ENCODE measurements at regions of chr10 and their contacts with region 1.

Region 1: GRCh38 chr10:43689955-43690771 is 41.5 kb upstream of the ZNF32 start:
- DNase-seq: peak; percentile 93

Region 2: DNA sequence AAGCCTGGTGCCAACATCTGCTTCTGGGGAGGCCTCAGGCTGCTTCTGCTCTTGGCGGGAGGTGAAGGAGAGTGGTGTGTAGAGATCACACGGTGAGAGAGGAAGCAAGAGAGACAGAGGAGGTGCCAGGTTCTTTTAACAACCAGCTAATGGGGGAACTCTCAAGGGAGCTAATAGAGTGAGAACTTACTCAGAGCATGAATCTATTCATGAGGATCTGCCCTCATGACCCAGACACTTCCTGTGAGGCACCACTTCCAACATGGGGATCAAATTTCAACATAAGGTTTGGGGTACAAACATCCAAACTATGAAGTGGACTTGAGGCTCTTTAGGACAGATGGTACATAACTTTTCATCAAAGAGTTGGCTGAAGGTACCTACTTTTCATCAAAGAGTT is 36.4 kb before region 1 on chr10:
- intact Hi-C with region 1: no loop called
- DNase-seq: no peak

Region 3: DNA sequence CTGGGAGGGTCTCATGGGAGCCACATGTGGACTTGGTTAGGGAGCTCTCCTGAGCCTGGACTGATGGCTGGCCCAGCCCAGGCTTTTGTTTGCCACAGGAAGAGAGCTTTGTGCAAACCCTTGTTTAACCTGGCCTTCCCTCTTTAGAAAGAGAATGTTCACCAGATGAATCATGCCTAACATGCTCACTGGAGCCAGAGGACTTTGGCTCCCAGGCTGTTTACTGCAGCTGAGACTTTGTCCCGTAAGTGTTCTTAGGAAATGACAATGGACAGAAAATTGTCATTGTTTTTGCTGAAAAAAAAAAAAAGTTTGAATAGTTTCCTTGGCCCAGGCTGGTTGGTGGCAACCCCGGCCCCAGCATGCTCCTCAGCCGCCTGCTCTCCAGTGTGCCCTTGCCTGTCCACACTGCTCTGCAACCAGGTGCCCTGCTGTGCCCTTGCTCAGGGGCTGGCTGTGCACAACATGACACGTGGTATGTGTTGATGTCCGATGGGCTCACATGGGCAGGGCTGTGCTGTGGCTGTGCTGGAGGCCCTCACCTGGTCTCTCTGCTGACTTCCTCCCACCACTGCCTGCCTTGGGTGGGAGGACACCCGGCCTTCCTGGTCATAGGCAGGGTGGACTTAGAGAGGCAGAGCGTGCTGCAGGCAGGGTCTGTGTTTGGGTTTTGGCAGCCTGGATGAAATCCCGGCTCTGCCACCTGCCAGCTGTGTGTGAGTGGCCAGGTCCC is 173.9 kb after region 1 on chr10:
- intact Hi-C with region 1: loop called (anchors 5 kb)
- DNase-seq: peak; percentile 78

Region 4: DNA sequence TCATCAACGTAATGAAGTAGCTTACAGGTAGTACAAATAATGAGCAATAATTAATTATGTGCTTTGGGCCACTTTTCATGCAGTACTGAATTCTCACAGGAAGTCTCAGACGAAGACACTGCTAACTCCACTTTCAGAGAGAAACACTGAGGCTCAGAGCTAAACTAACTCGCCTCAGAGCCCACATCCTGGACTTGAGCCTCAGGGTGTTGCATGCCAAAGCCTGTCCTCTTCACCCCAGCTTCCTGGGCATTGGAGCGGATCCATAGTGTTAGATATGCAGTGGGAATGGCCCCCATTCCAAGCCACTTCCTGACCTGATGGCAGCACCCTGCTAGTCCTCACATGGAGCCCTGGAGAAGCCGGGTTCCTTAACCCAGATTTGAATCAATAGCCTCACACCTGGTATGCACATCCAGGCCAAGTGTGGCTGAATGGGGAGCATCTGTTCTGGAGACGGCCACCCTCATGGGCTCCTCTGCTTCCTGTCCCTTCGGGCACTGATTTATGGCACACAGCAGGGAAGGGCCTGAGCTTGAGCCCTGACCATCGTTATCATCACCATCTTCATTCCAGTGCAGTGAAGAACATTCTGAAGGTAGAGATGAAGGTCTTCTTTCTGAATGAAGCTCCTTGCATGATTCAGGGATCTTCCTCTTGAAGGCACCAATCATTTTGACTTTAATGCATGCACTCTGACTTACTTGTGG is 223.7 kb after region 1 on chr10:
- intact Hi-C with region 1: loop called (anchors 5 kb)
- DNase-seq: no peak

Region 5: DNA sequence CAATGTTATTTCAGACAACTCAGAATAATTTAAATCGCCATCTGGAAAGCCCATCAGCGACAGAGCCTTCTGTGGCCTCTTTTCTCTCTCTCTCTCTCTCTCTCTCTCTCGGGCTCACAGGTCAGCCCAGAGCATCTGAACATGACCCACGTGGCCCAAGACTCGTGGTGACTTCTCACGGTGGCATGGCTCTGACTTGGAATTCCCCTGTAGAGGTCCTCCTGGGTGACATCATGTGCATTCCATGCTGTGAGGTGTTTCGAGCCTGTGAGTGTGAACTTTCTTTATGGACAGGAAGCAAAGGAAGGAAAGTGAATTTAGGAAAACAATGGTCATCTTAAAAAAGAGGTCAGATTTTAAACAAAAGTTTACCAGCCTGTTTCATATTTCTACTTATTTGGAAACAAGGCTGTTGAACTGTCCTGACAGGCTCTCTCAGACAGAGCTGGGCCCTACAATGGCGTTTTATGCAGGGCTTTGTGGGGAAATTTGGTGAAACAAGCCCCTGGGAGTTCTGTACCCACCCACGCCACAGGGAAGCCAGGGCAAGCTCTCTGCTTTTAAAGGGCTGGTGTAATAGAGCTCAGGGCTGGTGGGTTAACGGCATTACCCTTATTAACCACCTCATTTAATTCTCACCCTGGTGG is 318.2 kb after region 1 on chr10:
- intact Hi-C with region 1: loop called (anchors 5 kb)
- DNase-seq: peak; percentile 76

Region 6: GRCh38 chr10:44046605-44047004 is 356.4 kb after region 1 on chr10:
- intact Hi-C with region 1: loop called (anchors 5 kb)
- DNase-seq: no peak

Region 7: DNA sequence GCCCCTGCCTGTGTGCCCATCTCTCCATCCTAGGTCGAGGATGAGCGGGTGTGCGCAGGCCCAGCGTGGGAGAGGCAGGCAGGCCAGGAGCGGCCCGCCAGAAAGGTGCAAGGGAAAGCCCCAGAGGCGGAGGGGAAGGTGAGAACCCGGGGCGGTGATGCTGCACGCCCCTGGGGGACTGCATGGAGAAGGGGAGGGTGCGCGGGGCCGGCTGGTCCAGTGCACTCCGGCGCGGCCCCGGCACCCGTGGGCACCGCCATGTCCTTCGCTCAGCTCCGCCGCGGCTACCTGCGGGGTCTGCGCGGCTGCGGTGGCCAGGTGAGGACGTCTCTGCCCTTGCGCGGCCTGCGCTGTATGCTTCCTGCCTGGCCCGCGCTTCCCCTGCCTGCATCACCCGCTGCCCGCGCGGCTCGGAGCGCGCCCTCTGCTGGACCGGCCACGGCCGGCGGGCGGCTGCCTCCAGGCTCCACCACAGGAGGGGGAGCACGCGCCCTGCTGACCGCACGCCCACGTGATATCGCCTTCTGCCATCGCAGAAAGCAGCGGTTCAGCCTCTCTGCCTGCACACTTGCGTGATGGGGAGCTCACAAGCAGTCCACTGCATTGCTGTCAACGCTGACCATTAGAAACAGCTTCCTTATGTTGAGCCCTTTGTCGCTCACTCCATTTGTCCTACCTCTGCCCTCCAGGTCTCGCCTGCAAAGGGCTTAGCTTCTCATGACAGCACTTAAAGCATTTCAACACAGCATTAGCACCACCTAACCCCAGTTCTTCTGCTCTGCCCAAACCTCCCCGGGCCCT is 620.8 kb after region 1 on chr10:
- intact Hi-C with region 1: loop called (anchors 1 kb)
- DNase-seq: peak; percentile 93

Measured in cardiac septum (tissue), 1 donor.